A549 (cell line): ENCODE measurements at regions of chr3 and their contacts with region 1.

Region 1: GRCh38 chr3:31531992-31532586 is 636 bp upstream of the STT3B start:
- DNase-seq: peak; percentile 94 to 99
- ATAC-seq: peak; percentile 86 to 92
- H3K4me3 ChIP-seq: peak overlapping the region; percentile 76
- H3K27ac ChIP-seq: peak overlapping the region; percentile 96 to 100
- H3K4me1 ChIP-seq: peaks cover 30% of the 10 kb centered on the region; the same call in 2 of the 3 replicates
- CTCF ChIP-seq: no peak
- EP300 ChIP-seq: no peak
- POLR2A ChIP-seq: peak; percentile 86
- RAD21 ChIP-seq: no peak; a peak in 1 of 5 replicates

Region 2: GRCh38 chr3:31288641-31289100 is 243.4 kb before region 1 on chr3:
- CTCF ChIA-PET with region 1: interaction called, 4 read pairs
- POLR2A ChIA-PET with region 1: interaction called, 10 read pairs
- DNase-seq: peak; percentile 44 to 91
- ATAC-seq: peak; percentile 96
- H3K4me3 ChIP-seq: no peak overlapping the region
- H3K27ac ChIP-seq: peak overlapping the region; percentile 42 to 80; a peak in 5 of 6 replicates
- H3K4me1 ChIP-seq: peaks cover 31% of the 10 kb centered on the region
- CTCF ChIP-seq: no peak
- EP300 ChIP-seq: peak; percentile 34 to 75; a peak in 3 of 5 replicates
- POLR2A ChIP-seq: no peak
- RAD21 ChIP-seq: peak in 1 of 2 experiments; percentile 58; a peak in 3 of 5 replicates

Region 3: GRCh38 chr3:31350307-31350706 is 181.8 kb before region 1 on chr3:
- CTCF ChIA-PET with region 1: no interaction called
- POLR2A ChIA-PET with region 1: no interaction called
- DNase-seq: no peak
- ATAC-seq: no peak
- H3K4me3 ChIP-seq: no peak overlapping the region
- H3K27ac ChIP-seq: no peak overlapping the region
- H3K4me1 ChIP-seq: no peaks in the 10 kb centered on the region
- CTCF ChIP-seq: no peak
- EP300 ChIP-seq: no peak
- POLR2A ChIP-seq: no peak
- RAD21 ChIP-seq: no peak

Region 4: DNA sequence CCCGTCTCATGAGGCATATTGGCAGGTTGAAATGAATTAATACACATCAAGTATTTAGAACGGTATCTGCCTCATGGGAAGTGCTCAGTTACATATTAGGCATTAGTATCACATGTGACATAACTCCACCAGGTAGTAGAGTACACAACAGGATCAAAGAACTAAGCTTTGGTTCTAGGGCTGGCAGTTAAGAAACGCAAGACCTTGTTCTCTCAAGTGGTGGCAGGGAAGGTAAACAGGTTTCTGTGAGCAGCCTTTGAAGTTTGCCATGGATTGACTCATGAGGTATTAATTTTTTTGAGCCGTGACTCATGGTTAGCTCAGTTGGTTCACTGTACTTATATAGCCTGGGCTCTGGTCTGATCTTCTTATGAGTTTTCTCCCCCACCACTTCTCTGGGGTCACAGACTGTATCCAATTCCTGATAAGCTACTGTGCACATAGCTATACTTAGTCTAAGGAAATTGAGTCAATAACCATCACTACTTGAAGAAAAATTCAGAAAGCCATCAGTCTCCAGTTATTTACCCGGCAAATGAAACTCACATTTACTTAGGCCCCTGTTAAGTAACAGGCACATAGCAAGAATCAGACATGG is 154.9 kb before region 1 on chr3:
- CTCF ChIA-PET with region 1: no interaction called
- POLR2A ChIA-PET with region 1: interaction called, 15 read pairs
- DNase-seq: peak; percentile 43 to 77
- ATAC-seq: peak; percentile 89 to 97
- H3K4me3 ChIP-seq: no peak overlapping the region
- H3K27ac ChIP-seq: peak overlapping the region; percentile 10 to 42; a peak in 3 of 6 replicates
- H3K4me1 ChIP-seq: peaks cover 17% of the 10 kb centered on the region
- CTCF ChIP-seq: no peak
- EP300 ChIP-seq: peak in 1 of 2 experiments; percentile 70; a peak in 2 of 5 replicates
- POLR2A ChIP-seq: no peak
- RAD21 ChIP-seq: peak in 1 of 2 experiments; percentile 36; a peak in 1 of 5 replicates

Region 5: GRCh38 chr3:31544634-31545033 is 12.5 kb after region 1 on chr3:
- CTCF ChIA-PET with region 1: interaction called, 10 read pairs
- POLR2A ChIA-PET with region 1: interaction called, 14 read pairs
- DNase-seq: peak in 1 of 2 experiments; percentile 7
- ATAC-seq: 0 out of 6 replicates have a peak, but pooled peaks of 1 of the 2 experiments have one; percentile 31
- H3K4me3 ChIP-seq: no peak overlapping the region
- H3K27ac ChIP-seq: peak overlapping the region in 1 of 2 experiments; percentile 42; a peak in 1 of 6 replicates
- H3K4me1 ChIP-seq: peaks cover 41% of the 10 kb centered on the region; the same call in 2 of the 3 replicates
- CTCF ChIP-seq: no peak
- EP300 ChIP-seq: no peak
- POLR2A ChIP-seq: no peak
- RAD21 ChIP-seq: no peak

Region 6: GRCh38 chr3:31592764-31593163 is 60.7 kb after region 1 on chr3:
- CTCF ChIA-PET with region 1: no interaction called
- POLR2A ChIA-PET with region 1: no interaction called
- DNase-seq: no peak
- ATAC-seq: no peak
- H3K4me3 ChIP-seq: no peak overlapping the region
- H3K27ac ChIP-seq: no peak overlapping the region
- H3K4me1 ChIP-seq: no peaks in the 10 kb centered on the region
- CTCF ChIP-seq: no peak
- EP300 ChIP-seq: no peak
- POLR2A ChIP-seq: no peak
- RAD21 ChIP-seq: no peak

Region 7: DNA sequence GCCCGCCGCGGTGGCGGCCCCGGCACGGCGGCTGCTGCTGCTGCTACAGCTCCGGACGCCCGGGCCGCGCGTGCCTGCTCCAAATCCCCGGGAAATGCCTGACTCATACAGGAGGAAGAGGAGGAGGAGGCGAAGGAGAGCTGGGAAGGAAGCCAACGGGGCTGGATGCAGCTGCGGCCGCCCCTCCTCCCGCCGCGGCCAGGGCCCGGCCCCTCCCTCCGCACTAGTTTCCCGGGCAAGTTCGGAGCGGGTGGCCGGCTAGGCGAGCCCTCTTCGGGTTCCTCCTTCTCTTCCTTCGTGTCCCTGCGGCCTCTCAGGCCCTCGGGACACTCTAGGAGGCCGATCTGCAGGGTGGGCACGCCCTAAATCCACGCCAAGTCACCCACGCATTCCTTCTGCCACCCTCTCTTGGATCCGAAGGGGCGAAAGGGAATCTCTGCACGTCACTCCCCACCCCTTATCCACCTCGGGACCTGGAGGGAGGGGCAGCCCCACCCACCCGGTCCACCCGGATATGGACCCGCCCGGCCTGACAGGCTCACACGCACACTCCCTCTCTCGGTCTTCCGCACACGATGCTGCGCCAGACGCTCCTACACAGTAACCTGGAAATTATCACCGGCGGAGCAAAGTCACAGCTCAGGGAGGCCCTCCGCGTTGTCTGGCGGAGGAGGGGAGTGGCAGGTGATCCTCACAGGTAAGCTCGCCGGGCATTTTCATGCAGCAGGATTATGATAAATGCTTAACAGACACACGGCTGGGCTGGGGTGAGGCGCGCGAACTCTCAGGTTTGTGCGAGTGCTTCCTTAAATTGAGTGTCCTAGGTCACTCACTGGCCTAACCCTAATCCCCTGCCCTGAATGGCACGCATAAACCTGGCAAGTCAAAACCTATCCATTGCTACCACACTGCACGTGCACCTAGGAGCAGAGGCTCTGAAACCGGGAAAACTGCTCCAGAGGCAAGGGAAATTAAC is 449.4 kb after region 1 on chr3 and contains the starts of genes OSBPL10 and ZNF860:
- CTCF ChIA-PET with region 1: no interaction called
- POLR2A ChIA-PET with region 1: interaction called, 13 read pairs
- DNase-seq: peak; percentile 53 to 81
- ATAC-seq: peak; percentile 84 to 85
- H3K4me3 ChIP-seq: peak within 1 kb of the TSS; percentile 94
- H3K27ac ChIP-seq: peak within 1 kb of the TSS; percentile 87 to 97
- H3K4me1 ChIP-seq: peaks cover 25% of the 10 kb centered on the region
- CTCF ChIP-seq: no peak
- EP300 ChIP-seq: no peak
- POLR2A ChIP-seq: peak; percentile 25
- RAD21 ChIP-seq: peak in 1 of 2 experiments; percentile 13; a peak in 1 of 5 replicates
- polyA plus RNA-seq, gene OSBPL10: 17.0 and 20.2 TPM in 2 replicates
- polyA plus RNA-seq, gene ZNF860: 2.4 and 3.0 TPM in 2 replicates